Pancreas (tissue), 10 donors: ENCODE measurements at regions of chr17 and their contacts with region 1.

Region 1: DNA sequence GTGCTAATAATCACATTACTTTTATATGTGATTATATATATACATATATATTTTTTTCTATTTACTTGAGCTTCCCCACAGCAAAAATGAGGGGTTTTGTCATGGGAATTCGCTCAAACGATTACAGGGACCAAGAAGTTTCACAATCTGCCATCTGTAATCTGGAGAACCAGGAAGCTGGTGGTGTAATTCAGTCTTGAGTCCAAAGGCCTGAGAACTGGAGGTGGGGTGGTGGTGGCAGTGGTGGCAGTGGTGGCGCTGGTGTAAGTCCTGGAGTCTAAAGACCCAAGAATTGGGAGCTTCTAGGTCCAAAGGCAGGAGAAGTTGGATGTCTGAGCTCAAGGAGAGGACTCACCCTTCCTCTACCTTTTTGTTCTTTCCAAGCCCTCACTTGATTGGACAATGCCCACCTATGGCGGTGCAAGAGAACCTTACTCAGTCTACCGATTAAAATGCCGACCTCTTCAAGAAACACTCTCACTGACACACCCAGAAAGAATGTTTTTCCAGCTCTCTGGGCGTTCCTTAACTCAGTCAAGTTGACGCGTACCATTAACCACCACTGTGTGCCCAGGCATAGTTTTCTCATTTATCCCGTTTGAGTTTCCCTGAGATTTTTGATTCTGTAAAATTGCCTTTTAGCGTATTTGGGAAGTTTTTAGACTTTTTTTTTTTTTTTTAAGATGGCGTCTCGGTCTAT is 31.9 kb downstream of the POLR2A start:
- DNase-seq: no peak
- ATAC-seq: peak in 3 of 4 donors; percentile 13 to 48 (median 39)
- H3K4me3 ChIP-seq: no peak overlapping the region
- H3K27ac ChIP-seq: peak overlapping the region in 1 of 4 donors; percentile 12
- H3K4me1 ChIP-seq: no peaks in the 10 kb centered on the region
- H3K27me3 ChIP-seq: no peaks in the 10 kb centered on the region
- CTCF ChIP-seq: no peak

Region 2: DNA sequence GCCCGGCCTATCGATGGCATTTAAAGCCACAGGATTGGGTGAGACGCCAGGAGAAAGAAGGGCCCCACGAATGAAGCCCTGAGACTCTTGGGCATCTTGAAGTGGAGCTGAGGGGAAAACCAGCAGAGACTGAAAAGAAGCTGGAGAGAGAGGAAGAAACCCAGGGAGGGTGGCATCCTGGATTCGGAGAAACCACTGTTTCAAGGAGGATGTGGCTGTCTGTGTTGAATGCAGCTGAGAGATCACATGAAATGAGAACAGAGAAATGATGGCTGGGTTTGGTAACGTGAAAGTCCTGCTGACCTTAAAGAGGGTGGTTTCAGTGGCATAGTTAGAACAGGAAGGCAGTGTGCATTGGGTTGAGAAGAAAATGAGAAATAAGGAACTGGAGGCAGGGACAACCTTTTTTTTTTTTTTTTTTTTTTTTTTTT is 36.6 kb after region 1 on chr17:
- intact Hi-C with region 1: loop called in 1 of 3 experiments (anchors 5 kb)
- DNase-seq: no peak
- ATAC-seq: peak in 1 of 4 donors; percentile 30
- H3K4me3 ChIP-seq: no peak overlapping the region
- H3K27ac ChIP-seq: peak overlapping the region in 1 of 4 donors; percentile 47
- H3K4me1 ChIP-seq: peaks cover 0 to 5% (median 4%) of the 10 kb centered on the region in 3 donors
- H3K27me3 ChIP-seq: no peaks in the 10 kb centered on the region
- CTCF ChIP-seq: no peak

Region 3: GRCh38 chr17:7561028-7561575 is 45.0 kb after region 1 on chr17:
- intact Hi-C with region 1: loop called in 1 of 3 experiments (anchors 5 kb)
- DNase-seq: peak; percentile 91 to 97 (median 95)
- ATAC-seq: peak; percentile 78 to 85 (median 80)
- H3K4me3 ChIP-seq: peak overlapping the region; percentile 80 to 97 (median 92)
- H3K27ac ChIP-seq: peak overlapping the region; percentile 79 to 94 (median 88)
- H3K4me1 ChIP-seq: peaks cover 25 to 43% (median 30%) of the 10 kb centered on the region in 3 donors
- H3K27me3 ChIP-seq: no peaks in the 10 kb centered on the region
- CTCF ChIP-seq: peak; percentile 62 to 80 (median 64)

Region 4: DNA sequence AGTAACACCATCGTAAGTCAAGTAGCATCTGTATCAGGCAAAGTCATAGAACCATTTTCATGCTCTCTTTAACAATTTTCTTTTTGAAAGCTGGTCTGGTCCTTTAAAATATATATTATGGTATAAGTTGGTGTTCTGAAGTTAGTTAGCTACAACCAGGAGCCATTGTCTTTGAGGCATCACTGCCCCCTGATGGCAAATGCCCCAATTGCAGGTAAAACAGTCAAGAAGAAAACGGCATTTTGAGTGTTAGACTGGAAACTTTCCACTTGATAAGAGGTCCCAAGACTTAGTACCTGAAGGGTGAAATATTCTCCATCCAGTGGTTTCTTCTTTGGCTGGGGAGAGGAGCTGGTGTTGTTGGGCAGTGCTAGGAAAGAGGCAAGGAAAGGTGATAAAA is 157.2 kb after region 1 on chr17:
- intact Hi-C with region 1: loop called in 1 of 3 experiments (anchors 10 kb)
- DNase-seq: peak in 1 of 6 donors; percentile 40
- ATAC-seq: peak in 1 of 4 donors; percentile 33
- H3K4me3 ChIP-seq: no peak overlapping the region
- H3K27ac ChIP-seq: no peak overlapping the region
- H3K4me1 ChIP-seq: no peaks in the 10 kb centered on the region
- H3K27me3 ChIP-seq: no peaks in the 10 kb centered on the region
- CTCF ChIP-seq: no peak

Region 5: DNA sequence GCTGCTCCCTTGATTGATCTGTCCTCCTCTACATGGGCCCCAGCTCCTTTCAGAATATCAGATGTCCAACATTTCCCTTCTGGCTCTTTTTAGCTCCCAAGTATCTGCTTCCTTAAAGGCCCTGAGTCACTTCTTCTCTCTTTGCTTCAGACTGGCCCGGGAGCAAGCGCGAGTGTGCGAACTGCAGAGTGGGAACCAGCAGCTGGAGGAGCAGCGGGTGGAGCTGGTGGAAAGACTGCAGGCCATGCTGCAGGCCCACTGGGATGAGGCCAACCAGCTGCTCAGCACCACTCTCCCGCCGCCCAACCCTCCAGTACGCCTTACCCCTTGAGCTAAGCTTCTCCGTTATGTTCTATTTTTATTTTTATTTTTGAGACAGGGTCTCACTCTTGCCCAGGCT is 428.3 kb after region 1 on chr17:
- intact Hi-C with region 1: no loop called
- DNase-seq: no peak
- ATAC-seq: no peak
- H3K4me3 ChIP-seq: no peak overlapping the region
- H3K27ac ChIP-seq: no peak overlapping the region
- H3K4me1 ChIP-seq: no peaks in the 10 kb centered on the region
- H3K27me3 ChIP-seq: no peaks in the 10 kb centered on the region
- CTCF ChIP-seq: no peak